ENCODE measurements at regions of chr2 and their contacts with region 1.

Region 1: DNA sequence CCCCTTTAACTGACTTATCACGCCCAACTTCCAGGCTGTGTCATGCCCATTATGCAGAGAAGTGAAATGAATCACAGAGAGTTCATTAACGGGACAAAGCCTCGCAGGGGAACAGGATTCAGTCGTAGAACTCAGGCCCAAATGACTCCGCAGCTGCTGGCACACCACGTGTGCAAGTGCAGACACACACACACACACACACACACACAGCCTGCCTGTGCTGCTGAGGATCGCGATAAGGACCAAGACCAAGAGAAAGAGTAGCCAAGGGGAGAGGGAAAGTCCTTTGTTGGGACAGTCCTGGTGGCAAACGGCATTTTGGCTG is 90.0 kb upstream of the TAF1B start:
- DNase-seq: peak; percentile 85
- H3K4me3 Mint-ChIP-seq: peak overlapping the region; percentile 23
- H3K27ac Mint-ChIP-seq: peak overlapping the region; percentile 65
- H3K4me1 Mint-ChIP-seq: peaks cover 39% of the 10 kb centered on the region
- H3K27me3 Mint-ChIP-seq: peaks cover 22% of the 10 kb centered on the region

Region 2: GRCh38 chr2:9423100-9423921 is 329.9 kb before region 1 on chr2 and contains the starts of genes CPSF3 and ITGB1BP1:
- CTCF ChIA-PET with region 1: no interaction called
- intact Hi-C with region 1: loop called (anchors 5 kb)
- DNase-seq: peak; percentile 97
- H3K4me3 Mint-ChIP-seq: no peak within 1 kb of the TSS
- H3K27ac Mint-ChIP-seq: peak within 1 kb of the TSS; percentile 92
- H3K4me1 Mint-ChIP-seq: peaks cover 39% of the 10 kb centered on the region
- H3K27me3 Mint-ChIP-seq: no peaks in the 10 kb centered on the region
- total RNA-seq, gene CPSF3: 64.5 to 65.7 TPM
- total RNA-seq, gene ITGB1BP1: 97.2 to 97.4 TPM

Region 3: DNA sequence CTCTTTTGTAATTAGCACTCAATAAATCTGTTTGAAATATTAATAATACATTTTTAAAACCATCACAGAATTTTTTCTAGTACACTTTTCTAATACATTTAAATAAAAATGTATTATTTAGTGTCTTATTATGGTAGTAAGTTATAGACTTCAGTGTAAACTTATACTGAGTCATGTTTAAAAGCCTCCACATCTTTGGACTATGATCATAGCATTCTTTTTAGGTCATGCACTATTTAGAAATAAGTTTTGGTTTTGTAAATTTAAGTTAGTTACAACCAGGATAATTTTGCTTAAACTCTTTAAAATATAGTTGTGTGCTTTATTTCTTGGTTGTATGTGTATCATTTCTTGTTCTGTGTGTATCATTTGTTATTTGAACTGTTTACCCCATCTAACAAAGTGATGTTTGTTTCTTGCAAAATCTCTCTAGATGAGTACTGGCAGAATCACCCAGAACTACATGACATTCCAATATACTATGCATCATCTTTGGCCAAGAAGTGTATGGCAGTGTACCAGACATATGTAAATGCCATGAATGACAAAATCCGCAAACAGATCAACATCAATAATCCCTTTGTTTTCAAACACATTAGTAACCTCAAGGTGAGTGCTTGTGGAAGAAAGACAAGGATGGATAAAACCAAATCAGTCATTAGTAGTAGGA is 313.0 kb before region 1 on chr2:
- CTCF ChIA-PET with region 1: no interaction called
- intact Hi-C with region 1: no loop called
- DNase-seq: no peak
- H3K4me3 Mint-ChIP-seq: no peak overlapping the region
- H3K27ac Mint-ChIP-seq: no peak overlapping the region
- H3K4me1 Mint-ChIP-seq: no peaks in the 10 kb centered on the region
- H3K27me3 Mint-ChIP-seq: no peaks in the 10 kb centered on the region

Region 4: DNA sequence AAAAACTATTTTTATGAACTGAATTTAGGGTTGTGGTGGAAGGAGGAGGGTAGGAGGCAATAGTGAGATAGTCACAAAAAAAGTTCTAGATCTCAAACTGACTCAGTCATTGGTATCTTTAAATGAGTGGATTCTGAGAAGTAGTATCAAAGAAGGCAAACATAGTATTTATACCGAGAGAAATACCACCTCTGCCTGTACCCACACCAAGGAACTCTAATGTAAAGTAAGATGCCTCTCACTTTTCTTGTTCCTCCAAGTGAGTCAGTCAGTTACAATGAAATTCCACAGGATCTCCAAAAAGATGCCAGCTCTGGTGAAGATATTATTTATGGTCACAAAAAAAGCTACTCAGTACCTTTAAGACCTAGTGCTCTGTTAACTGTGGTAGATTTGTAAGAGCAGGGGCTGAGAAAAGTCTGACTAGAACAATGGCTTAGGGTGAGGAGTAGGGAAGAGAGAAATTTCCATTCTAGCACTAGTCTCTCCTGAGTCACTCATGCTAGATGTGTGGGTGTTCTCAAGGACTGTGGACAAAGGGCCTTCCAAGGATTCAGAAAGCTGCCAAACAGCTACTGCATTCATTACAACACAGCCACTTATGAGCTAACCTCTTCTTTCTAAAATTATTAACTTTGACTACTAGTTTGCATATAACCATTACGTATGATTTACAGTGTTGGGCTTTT is 158.7 kb before region 1 on chr2:
- CTCF ChIA-PET with region 1: no interaction called
- intact Hi-C with region 1: loop called (anchors 2 kb)
- DNase-seq: peak; percentile 21
- H3K4me3 Mint-ChIP-seq: peak overlapping the region; percentile 1
- H3K27ac Mint-ChIP-seq: peak overlapping the region; percentile 86
- H3K4me1 Mint-ChIP-seq: peaks cover 72% of the 10 kb centered on the region
- H3K27me3 Mint-ChIP-seq: no peaks in the 10 kb centered on the region

Region 5: GRCh38 chr2:9656270-9656766 is 96.9 kb before region 1 on chr2:
- CTCF ChIA-PET with region 1: no interaction called
- intact Hi-C with region 1: loop called (anchors 2 kb)
- DNase-seq: peak; percentile 75
- H3K4me3 Mint-ChIP-seq: no peak overlapping the region
- H3K27ac Mint-ChIP-seq: peak overlapping the region; percentile 74
- H3K4me1 Mint-ChIP-seq: peaks cover 19% of the 10 kb centered on the region
- H3K27me3 Mint-ChIP-seq: no peaks in the 10 kb centered on the region

Region 6: DNA sequence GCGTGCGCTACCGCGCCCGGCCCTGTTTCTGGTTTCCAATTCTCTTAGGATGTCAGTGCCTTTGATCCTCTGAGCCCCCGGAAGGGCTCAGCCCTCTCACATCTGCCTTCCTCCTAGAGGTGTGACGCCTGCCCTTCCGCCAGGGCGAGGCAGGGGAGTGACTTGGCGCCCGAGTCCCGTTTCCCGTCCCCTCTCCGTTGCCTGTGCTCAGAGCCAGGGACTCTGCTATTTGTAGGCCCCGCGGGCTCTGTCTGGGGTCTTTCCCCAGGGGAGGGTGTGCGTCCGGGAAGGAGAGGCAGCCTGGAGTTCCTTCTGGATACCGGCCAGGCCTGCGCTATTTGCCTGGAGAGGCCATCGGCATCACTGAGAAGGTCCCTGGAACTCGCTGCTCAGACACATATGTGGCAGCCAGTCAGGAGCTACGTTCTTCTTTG is 13.7 kb before region 1 on chr2:
- CTCF ChIA-PET with region 1: interaction called, 4 read pairs
- intact Hi-C with region 1: loop called (anchors 1 kb)
- DNase-seq: peak; percentile 75
- H3K4me3 Mint-ChIP-seq: peak overlapping the region; percentile 65
- H3K27ac Mint-ChIP-seq: peak overlapping the region; percentile 80
- H3K4me1 Mint-ChIP-seq: peaks cover 45% of the 10 kb centered on the region
- H3K27me3 Mint-ChIP-seq: no peaks in the 10 kb centered on the region

Region 7: GRCh38 chr2:9778012-9778411 is 24.8 kb after region 1 on chr2:
- CTCF ChIA-PET with region 1: interaction called, 5 read pairs
- intact Hi-C with region 1: loop called (anchors 1 kb)
- DNase-seq: peak; percentile 42
- H3K4me3 Mint-ChIP-seq: no peak overlapping the region
- H3K27ac Mint-ChIP-seq: no peak overlapping the region
- H3K4me1 Mint-ChIP-seq: peaks cover 40% of the 10 kb centered on the region
- H3K27me3 Mint-ChIP-seq: no peaks in the 10 kb centered on the region

Region 8: DNA sequence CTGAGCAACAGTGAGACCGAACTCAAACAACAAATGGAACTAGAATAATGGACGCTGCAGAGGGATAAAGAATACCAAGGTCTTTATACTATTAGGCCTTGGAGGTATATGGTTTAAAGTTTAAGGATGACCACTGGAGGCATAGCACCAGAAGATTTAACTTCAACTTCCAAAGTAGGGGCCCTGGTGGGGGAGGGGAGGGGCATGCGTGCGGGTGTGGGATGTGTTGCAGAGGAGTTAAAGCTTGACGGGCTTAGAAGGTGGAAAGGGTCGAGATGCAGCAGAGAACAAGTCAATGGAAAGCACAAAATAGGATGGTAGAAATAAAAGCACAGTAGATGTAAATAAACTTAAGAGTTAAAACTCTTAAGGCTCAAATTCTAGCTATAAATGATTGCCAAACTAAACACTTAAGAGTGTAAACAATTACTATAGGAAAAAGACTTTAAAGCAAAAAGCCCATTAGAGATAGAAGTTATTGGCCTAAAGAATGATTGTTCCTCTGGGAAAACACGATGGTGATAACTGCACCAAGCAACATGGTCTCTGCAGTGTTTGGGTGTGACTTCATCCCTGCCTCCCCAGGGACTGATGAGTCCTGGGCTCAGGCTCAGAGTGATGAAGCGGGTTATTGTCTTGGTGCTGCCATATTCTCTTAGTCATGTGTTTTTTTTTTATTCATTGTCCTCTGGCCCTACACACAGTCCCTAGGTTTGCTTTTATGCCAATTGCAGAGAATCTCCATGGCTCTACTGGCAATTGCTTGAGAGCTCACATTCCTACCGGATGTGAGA is 382.3 kb after region 1 on chr2:
- CTCF ChIA-PET with region 1: no interaction called
- intact Hi-C with region 1: no loop called
- DNase-seq: no peak
- H3K4me3 Mint-ChIP-seq: no peak overlapping the region
- H3K27ac Mint-ChIP-seq: peak overlapping the region; percentile 14
- H3K4me1 Mint-ChIP-seq: peaks cover 10% of the 10 kb centered on the region
- H3K27me3 Mint-ChIP-seq: no peaks in the 10 kb centered on the region

Measured in activated naive CD4-positive, alpha-beta T cell treated with anti-CD3 and anti-CD28 coated beads for 36 hours (primary cell).